PC-3 (cell line): ENCODE measurements at regions of chr18 and their contacts with region 1.

Region 1: GRCh38 chr18:9913526-9914333 is at the start of gene VAPA:
- DNase-seq: peak; percentile 98
- ATAC-seq: peak; percentile 83
- H3K4me3 ChIP-seq: peak within 1 kb of the TSS; percentile 78
- H3K27ac ChIP-seq: peak within 1 kb of the TSS; percentile 84
- H3K4me1 ChIP-seq: peaks cover 33% of the 10 kb centered on the region
- H3K27me3 ChIP-seq: no peaks in the 10 kb centered on the region
- CTCF ChIP-seq: no peak
- total RNA-seq, gene VAPA: 281 and 293 TPM in 2 replicates

Region 2: DNA sequence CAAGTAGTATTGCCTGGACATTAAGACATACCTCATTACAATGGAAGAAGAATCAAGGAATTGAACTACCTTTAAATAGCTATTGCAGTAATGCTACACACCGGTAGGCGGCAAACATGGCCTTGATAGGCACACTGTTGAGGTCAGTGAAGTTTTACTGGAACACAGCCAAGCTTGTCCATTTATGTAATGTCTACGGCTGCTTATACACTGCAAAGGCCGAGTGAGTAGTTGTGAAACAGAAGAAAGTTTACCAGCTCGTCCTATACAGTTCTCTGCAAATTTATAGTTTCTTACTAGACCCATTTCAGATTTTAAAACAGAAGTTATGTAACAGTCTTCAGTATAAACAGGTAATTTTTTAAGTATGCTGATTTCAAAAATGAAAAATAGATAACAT is 338.2 kb before region 1 on chr18:
- CTCF ChIA-PET with region 1: interaction called, 3 read pairs
- POLR2A ChIA-PET with region 1: no interaction called
- intact Hi-C with region 1: loop called (anchors 10 kb)
- DNase-seq: peak; percentile 95
- ATAC-seq: peak; percentile 98
- H3K4me3 ChIP-seq: no peak overlapping the region
- H3K27ac ChIP-seq: peak overlapping the region; percentile 2; the same call in 1 of the 2 replicates
- H3K4me1 ChIP-seq: peaks cover 5% of the 10 kb centered on the region; the same call in 1 of the 2 replicates
- H3K27me3 ChIP-seq: no peaks in the 10 kb centered on the region
- CTCF ChIP-seq: peak; percentile 95

Region 3: DNA sequence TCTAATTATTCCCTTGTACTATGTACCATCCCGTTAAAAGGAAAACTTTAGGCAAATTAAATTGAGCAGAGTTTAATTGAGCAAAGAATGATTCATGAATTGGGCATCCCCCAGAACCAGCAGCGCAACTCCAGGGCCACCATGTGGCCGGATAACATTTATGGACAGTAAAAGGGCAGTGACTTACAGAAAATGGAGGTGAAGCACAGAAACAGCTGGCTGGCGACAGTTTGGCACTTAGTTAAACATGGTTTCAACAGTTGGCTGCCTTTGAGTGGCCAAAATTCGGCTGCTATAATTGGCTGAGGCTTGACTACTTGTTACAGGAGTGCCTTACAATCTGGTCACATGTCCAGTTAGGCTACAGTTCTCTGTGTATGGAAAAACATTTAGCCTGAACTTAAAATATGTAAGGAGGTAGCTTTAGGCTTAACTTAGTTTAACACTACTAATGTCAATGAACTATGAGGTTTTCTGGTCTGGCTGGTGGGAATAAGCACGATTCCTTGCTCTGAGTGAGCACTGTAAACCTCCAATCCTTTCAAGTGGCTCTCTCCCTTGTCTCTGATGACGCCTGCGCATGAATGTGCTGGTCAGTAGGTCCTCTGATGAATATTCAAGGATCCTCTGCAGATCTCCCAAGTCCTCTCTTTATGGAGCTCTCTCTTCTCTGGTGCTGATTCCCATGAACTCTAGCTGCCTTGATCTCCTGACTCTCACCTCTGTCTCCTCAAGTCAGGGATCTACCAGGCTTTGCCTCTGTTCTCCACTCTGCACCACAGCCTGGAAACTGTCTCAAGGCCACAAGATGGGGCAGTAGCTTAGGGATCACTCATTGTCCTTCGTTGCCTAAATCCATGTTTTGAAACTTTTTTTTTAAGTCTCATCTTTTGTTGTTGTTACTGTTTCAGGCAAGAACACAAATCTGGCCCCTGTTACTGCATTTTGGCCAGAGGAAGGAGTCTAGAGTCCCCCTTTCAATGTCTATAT is 230.0 kb before region 1 on chr18:
- CTCF ChIA-PET with region 1: no interaction called
- POLR2A ChIA-PET with region 1: no interaction called
- intact Hi-C with region 1: loop called (anchors 2 kb)
- DNase-seq: peak; percentile 89
- ATAC-seq: peak; percentile 92
- H3K4me3 ChIP-seq: peak overlapping the region; percentile 26
- H3K27ac ChIP-seq: peak overlapping the region; percentile 64
- H3K4me1 ChIP-seq: peaks cover 22% of the 10 kb centered on the region
- H3K27me3 ChIP-seq: no peaks in the 10 kb centered on the region
- CTCF ChIP-seq: peak; percentile 81

Region 4: GRCh38 chr18:9737472-9738121 is 176.1 kb before region 1 on chr18:
- CTCF ChIA-PET with region 1: no interaction called
- POLR2A ChIA-PET with region 1: no interaction called
- intact Hi-C with region 1: loop called (anchors 1 kb)
- DNase-seq: peak; percentile 85
- ATAC-seq: peak; percentile 58
- H3K4me3 ChIP-seq: peak overlapping the region; percentile 43
- H3K27ac ChIP-seq: peak overlapping the region; percentile 83
- H3K4me1 ChIP-seq: peaks cover 60% of the 10 kb centered on the region
- H3K27me3 ChIP-seq: no peaks in the 10 kb centered on the region
- CTCF ChIP-seq: no peak

Region 5: DNA sequence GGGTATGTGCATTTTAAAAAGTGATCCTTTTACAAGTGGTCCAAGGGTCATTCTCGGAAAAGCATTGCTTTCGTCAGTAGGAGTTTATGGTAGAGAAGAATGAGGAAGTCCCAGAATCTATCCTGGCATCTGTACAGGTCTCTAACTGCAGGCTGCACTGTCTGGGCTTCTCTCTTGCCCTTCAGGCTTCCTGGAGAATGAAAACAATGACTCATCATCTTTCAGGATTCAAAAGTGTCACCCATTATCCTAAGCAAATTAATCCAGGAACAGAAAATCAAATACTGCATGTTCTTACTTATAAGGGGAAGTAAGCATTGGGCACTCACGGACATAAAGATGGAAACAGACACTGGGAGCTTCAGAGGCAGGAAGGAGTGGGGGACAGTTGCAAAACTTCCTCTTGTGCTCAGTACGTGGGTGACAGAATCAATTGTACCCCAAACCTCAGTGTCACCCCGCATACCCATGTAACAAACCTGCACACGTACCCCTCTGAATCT is 88.1 kb before region 1 on chr18:
- CTCF ChIA-PET with region 1: no interaction called
- POLR2A ChIA-PET with region 1: no interaction called
- intact Hi-C with region 1: loop called (anchors 2 kb)
- DNase-seq: peak; percentile 95
- ATAC-seq: peak; percentile 81
- H3K4me3 ChIP-seq: peak overlapping the region; percentile 16; the same call in 1 of the 2 replicates
- H3K27ac ChIP-seq: peak overlapping the region; percentile 70
- H3K4me1 ChIP-seq: peaks cover 49% of the 10 kb centered on the region
- H3K27me3 ChIP-seq: no peaks in the 10 kb centered on the region
- CTCF ChIP-seq: no peak

Region 6: DNA sequence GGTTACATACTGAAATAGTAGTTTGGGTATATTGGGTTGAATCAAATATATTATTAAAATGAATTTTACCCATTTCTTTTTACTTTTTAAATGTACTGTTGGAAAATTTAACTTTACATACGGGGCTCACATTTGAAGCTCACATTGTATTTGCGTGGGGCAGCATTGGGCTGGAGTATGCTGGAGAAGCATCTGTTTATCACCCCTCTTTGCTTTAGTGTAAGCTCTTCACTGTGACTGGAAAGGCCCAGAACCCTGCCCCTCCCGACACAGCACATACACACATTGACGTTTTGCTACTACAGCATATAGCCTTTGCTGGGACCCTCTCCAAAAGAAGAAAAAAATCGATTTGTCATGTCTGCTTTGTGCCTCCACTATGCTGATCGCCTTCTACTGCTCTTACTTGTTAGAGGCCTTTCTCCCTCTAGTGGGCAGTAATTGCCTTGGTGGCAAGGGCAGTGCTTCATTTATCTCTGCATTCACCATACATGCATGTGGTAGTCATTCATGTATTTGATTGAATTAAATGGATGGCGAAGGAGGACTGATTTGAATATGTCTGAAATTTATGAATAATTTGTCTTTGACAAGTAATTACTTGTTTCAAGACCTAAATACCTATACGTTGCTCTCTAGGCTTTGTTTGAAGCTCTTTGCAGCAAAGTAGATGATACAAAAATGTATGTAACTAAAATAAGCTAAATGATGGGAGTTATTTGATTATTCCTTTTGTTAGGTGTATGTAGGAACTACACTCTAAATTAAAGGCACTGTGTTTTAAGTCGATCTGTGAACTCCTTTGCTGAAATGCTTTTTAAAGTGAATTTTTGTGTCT is 37.5 kb after region 1 on chr18:
- CTCF ChIA-PET with region 1: interaction called, 3 read pairs
- POLR2A ChIA-PET with region 1: interaction called, 3 read pairs
- intact Hi-C with region 1: loop called (anchors 5 kb)
- DNase-seq: peak; percentile 61
- ATAC-seq: peak; percentile 72
- H3K4me3 ChIP-seq: no peak overlapping the region
- H3K27ac ChIP-seq: no peak overlapping the region
- H3K4me1 ChIP-seq: no peaks in the 10 kb centered on the region; the same call in 1 of the 2 replicates
- H3K27me3 ChIP-seq: no peaks in the 10 kb centered on the region
- CTCF ChIP-seq: peak; percentile 87